Activated CD4-positive, alpha-beta T cell treated with anti-CD3 and anti-CD28 coated beads for 36 hours (primary cell): ENCODE measurements at regions of chr2 and their contacts with region 1.

Region 1: GRCh38 chr2:68653538-68653982 is 10.2 kb downstream of the PROKR1 start:
- DNase-seq: peak; percentile 73
- ATAC-seq: peak; percentile 90
- H3K4me3 Mint-ChIP-seq: peak overlapping the region; percentile 0
- H3K27ac Mint-ChIP-seq: peak overlapping the region; percentile 68
- H3K4me1 Mint-ChIP-seq: peaks cover 43% of the 10 kb centered on the region
- H3K27me3 Mint-ChIP-seq: peaks cover 15% of the 10 kb centered on the region

Region 2: DNA sequence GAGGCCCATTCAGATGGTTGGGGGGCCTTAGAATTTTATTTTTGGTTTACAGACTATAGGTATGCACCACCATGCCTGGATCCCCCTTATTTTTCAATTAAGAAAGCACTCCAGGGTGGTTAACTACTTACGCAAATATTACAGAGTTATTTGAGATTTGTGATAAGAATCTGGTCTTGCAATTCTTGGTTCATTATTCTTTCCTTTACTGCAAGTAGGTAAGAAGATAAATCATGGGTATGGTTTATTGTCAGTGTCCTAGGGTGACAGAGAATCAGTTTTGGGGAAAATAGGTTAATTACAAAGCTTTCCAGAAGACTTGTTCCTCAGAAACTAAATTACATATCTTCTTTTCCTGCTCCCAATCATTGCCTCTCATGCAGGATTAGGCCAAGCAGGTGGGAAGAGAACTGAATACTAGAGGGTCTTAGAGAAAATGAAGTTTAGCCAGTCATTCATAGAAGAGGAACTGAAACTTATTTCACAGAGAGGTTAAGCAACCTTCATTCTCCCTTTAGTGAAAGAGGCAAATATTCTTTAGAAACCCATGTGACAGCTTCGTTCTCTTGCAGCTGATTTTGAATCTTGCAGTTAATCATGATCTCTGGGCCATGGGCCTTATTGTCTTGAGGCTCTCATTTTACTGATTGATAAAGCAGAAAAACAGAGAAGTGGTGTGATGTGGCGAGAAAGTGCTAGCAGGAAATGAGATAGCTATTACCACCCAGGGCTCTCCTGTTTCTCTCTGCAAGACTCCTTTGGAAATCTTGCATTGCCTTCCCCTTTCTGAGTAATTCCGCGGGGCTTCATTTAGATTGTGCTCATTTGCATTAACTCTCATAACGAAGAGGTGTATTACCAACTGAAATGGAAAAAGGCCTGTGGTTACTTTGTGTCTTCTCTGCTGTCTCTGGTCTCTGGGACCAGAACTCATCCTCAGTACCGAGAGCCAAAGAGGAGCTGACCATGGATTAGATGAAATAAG is 36.3 kb after region 1 on chr2:
- CTCF ChIA-PET with region 1: no interaction called
- POLR2A ChIA-PET with region 1: interaction called, 4 read pairs
- intact Hi-C with region 1: loop called (anchors 1 to 2 kb)
- DNase-seq: peak; percentile 22
- ATAC-seq: peak; percentile 85
- H3K4me3 Mint-ChIP-seq: peak overlapping the region; percentile 5
- H3K27ac Mint-ChIP-seq: peak overlapping the region; percentile 21
- H3K4me1 Mint-ChIP-seq: peaks cover 21% of the 10 kb centered on the region
- H3K27me3 Mint-ChIP-seq: peaks cover 3% of the 10 kb centered on the region

Region 3: DNA sequence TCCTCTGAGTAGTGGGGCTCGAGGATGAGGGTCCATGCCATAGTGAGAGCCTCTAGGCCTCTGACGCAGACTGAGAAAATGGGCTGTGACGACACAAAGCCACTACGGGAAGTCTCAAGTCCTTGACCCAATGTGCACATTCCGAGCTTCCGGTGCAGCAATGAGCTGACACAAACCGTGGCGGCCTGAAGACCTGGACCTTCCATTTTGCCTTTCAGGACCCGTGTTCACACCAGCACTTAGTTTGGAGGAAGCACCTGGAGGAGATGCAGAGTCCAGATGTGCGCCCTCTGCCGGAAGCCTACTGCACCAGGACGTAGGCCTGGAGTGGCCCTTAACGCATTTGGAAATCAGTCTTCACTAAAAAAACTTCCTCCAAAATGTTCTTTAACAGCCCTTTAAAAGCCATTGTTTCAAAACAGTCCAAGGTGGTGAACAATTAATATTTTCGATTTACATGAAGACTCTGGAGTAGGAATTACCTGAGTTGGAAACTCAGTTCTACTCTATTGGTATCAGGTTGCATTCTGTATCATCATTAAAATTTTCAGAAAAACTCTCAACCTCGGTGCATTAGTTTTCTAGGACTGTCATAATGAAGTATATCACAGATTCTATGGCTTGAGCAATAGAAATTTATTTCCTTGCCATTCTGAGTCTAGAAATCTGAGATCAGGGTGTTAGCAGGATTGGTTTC is 183.8 kb after region 1 on chr2:
- CTCF ChIA-PET with region 1: no interaction called
- POLR2A ChIA-PET with region 1: no interaction called
- intact Hi-C with region 1: loop called (anchors 1 to 2 kb)
- DNase-seq: peak; percentile 84
- ATAC-seq: peak; percentile 45
- H3K4me3 Mint-ChIP-seq: no peak overlapping the region
- H3K27ac Mint-ChIP-seq: peak overlapping the region; percentile 79
- H3K4me1 Mint-ChIP-seq: peaks cover 39% of the 10 kb centered on the region
- H3K27me3 Mint-ChIP-seq: no peaks in the 10 kb centered on the region

Region 4: DNA sequence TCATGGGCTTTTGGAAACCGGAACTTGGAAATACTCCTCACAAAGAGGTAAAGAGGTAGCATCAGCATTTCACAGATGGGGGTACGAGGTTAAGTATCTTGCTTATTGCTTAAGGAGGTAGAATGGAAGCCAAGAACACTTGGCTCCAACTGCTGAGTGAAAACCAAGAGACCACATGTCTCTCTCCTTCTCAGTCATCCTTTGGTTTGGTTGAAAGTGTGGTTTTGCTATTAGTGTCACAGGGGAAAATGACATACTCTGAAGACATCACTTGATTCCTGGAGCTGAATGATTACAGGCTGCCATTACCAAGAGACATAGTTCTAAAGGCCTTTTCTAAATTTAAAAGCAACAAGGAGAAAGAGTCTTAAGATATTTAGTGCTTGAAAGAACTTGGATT is 400.9 kb after region 1 on chr2:
- CTCF ChIA-PET with region 1: no interaction called
- POLR2A ChIA-PET with region 1: no interaction called
- intact Hi-C with region 1: loop called in 1 of 2 experiments (anchors 1 kb)
- DNase-seq: peak; percentile 21
- ATAC-seq: peak; percentile 99
- H3K4me3 Mint-ChIP-seq: no peak overlapping the region
- H3K27ac Mint-ChIP-seq: no peak overlapping the region
- H3K4me1 Mint-ChIP-seq: peaks cover 8% of the 10 kb centered on the region
- H3K27me3 Mint-ChIP-seq: peaks cover 47% of the 10 kb centered on the region